SK-N-SH (cell line): ENCODE measurements at regions of chr16 and their contacts with region 1.

Region 1: GRCh38 chr16:89972244-89973234 is 24.0 kb downstream of the DEF8 start:
- DNase-seq: peak; percentile 100
- H3K4me3 ChIP-seq: peak overlapping the region; percentile 76 to 100
- H3K27ac ChIP-seq: peak overlapping the region; percentile 73 to 94
- H3K4me1 ChIP-seq: peaks cover 7 to 23% of the 10 kb centered on the region in 2 experiments; a peak in 3 of 4 replicates
- H3K27me3 ChIP-seq: no peaks in the 10 kb centered on the region
- CTCF ChIP-seq: no peak
- EP300 ChIP-seq: peak in 1 of 2 experiments; percentile 17; a peak in 1 of 4 replicates
- RAD21 ChIP-seq: no peak

Region 2: DNA sequence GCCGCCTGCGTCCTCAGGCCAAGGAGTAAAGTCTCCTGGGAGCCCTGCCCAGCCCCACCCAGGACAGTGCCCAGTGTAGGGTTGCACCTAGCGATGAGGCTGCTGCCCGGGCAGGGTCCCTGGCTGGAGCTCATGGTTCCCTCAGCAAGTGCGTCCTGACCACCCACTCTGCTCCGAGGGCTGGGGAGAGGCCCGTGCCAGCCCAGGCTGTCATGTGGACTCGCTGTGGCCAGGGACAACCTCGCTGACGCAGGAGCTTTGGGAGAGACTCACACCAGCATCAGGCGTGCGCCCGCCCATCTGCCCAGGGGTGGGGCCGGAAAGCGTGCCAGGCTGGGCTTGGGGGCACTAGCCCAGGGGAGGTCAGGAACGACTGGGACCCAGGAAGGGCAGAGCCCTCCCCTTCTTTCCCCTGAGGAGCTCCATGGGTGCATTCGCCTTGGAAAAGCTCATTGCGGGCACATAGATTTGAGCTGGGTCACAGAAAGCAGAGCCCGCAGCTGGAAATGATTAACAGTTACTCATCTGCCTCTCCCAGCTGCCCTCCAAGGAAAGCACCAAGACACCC is 339.4 kb before region 1 on chr16:
- CTCF ChIA-PET with region 1: no interaction called
- POLR2A ChIA-PET with region 1: no interaction called
- DNase-seq: peak; percentile 67
- H3K4me3 ChIP-seq: 0 out of 4 replicates have a peak overlapping the region, but pooled peaks of 1 of the 2 experiments have one; percentile 10
- H3K27ac ChIP-seq: peak overlapping the region in 1 of 2 experiments; percentile 27; a peak in 1 of 4 replicates
- H3K4me1 ChIP-seq: peaks cover 8 to 14% of the 10 kb centered on the region in 2 experiments; a peak in 3 of 4 replicates
- H3K27me3 ChIP-seq: no peaks in the 10 kb centered on the region
- CTCF ChIP-seq: no peak
- EP300 ChIP-seq: no peak
- RAD21 ChIP-seq: no peak

Region 3: DNA sequence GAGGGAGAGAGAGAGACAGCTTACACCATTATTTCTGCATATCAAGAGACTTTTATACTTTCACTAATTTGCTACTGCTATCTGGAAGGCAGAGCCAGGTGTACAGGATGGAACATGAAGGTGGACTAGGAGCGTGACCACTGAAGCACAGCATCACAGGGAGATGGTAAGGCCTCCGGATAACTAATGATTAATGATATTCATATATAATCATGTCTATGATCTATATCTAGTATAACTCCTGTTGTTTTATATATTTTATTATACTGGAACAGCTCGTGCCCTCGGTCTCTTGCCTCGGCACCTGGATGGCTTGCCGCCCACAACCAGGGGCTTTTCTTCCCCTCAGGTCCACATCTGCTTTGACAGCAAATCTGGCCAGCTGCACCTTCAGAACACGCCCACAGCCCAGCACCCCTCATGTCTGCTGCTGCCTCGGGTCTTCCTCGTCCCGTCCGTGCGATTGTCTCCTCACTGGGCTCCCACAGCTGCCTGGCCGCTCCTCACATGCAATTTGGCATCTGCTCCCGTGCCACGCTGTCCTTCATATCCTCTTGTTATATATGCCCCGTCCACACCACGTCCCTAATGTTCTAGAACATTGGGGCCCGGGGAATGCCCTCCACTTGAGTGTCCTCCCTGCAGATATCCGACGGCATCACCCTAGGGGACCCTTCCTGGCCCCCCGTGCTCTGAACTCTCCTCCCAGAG is 34.2 kb before region 1 on chr16:
- CTCF ChIA-PET with region 1: no interaction called
- POLR2A ChIA-PET with region 1: no interaction called
- DNase-seq: no peak
- H3K4me3 ChIP-seq: no peak overlapping the region
- H3K27ac ChIP-seq: no peak overlapping the region
- H3K4me1 ChIP-seq: no peaks in the 10 kb centered on the region
- H3K27me3 ChIP-seq: no peaks in the 10 kb centered on the region
- CTCF ChIP-seq: no peak
- EP300 ChIP-seq: no peak
- RAD21 ChIP-seq: no peak

Region 4: GRCh38 chr16:90019543-90020259 is 47.2 kb after region 1 on chr16:
- CTCF ChIA-PET with region 1: interaction called, 18 read pairs
- POLR2A ChIA-PET with region 1: interaction called, 7 read pairs
- DNase-seq: peak; percentile 94
- H3K4me3 ChIP-seq: peak overlapping the region; percentile 72 to 77
- H3K27ac ChIP-seq: peak overlapping the region; percentile 62 to 88
- H3K4me1 ChIP-seq: peaks cover 20 to 39% of the 10 kb centered on the region in 2 experiments
- H3K27me3 ChIP-seq: no peaks in the 10 kb centered on the region
- CTCF ChIP-seq: peak; percentile 52
- EP300 ChIP-seq: 0 out of 4 replicates have a peak, but pooled peaks of 1 of the 2 experiments have one; percentile 7
- RAD21 ChIP-seq: no peak

Region 5: GRCh38 chr16:90046971-90047713 is 74.6 kb after region 1 on chr16:
- CTCF ChIA-PET with region 1: no interaction called
- POLR2A ChIA-PET with region 1: no interaction called
- DNase-seq: no peak
- H3K4me3 ChIP-seq: peak overlapping the region; percentile 48 to 55; a peak in 3 of 4 replicates
- H3K27ac ChIP-seq: peak overlapping the region in 1 of 2 experiments; percentile 68; a peak in 1 of 4 replicates
- H3K4me1 ChIP-seq: peaks cover 12 to 17% of the 10 kb centered on the region in 2 experiments; a peak in 3 of 4 replicates
- H3K27me3 ChIP-seq: no peaks in the 10 kb centered on the region
- CTCF ChIP-seq: no peak
- EP300 ChIP-seq: no peak
- RAD21 ChIP-seq: no peak